ENCODE measurements at regions of chr5 and their contacts with region 1.

Region 1: DNA sequence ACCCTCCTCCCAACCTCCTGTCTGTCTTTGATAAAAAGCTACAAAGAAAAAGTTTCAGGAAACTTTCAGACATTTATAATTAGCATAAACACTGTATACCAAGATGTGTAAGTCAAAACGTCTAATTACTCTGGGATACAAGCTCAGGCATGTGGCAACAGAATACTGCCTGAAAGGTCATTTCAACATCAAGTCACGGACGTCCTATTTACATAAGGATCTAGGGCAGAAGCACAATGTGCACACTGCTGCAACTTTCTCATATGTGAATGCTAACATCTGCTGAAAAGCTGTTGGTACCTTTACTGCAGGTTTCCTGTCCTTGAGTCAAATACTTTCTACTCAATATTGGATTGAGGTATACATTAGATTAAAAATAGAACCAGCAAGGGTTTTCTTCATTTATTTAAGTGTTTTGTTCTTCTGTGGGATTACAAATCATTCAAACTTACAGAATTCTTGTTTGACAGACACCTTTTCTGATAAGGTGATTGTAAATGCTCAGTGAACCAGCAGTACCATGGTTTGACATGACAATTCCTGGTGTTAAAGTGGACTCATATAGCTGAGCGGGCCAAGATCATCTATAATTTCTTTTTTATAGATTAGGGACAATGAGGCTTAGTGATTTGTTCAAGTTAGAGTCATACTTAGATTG is 36.8 kb downstream of the ELL2 start:
- DNase-seq: no peak
- H3K4me3 ChIP-seq: no peak overlapping the region
- H3K27ac ChIP-seq: no peak overlapping the region
- H3K4me1 ChIP-seq: no peaks in the 10 kb centered on the region
- CTCF ChIP-seq: no peak

Region 2: GRCh38 chr5:95794070-95794516 is 130.8 kb before region 1 on chr5:
- CTCF ChIA-PET with region 1: no interaction called
- POLR2A ChIA-PET with region 1: no interaction called
- intact Hi-C with region 1: no loop called
- DNase-seq: no peak
- H3K4me3 ChIP-seq: no peak overlapping the region
- H3K27ac ChIP-seq: no peak overlapping the region
- H3K4me1 ChIP-seq: peaks cover 7% of the 10 kb centered on the region
- CTCF ChIP-seq: no peak

Region 3: DNA sequence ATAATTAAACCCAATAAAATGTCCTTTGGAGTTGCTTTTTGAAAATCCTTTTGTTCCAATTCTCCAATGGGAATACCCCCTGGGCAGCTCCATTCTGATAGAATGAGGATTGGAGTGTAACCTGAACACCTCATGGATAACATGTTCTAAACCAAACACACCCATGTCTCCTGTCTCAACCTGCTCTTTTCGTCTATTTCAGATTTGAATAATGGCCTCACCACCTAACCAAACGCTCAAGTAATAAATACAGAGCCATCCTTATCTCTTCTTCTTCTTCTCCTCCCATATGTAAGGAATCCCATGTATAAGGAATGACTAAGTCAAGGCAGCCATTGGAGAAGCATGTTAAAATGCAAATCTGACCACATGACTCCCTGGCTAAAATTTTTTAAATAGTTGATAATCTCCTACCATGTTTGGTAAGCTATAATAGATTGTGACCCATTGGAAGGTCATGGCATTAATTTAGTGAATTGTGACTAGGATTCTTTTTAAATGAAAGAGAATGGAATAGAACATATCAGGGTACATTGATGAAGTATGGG is 10.8 kb after region 1 on chr5:
- CTCF ChIA-PET with region 1: no interaction called
- POLR2A ChIA-PET with region 1: interaction called, 10 read pairs
- intact Hi-C with region 1: no loop called
- DNase-seq: no peak
- H3K4me3 ChIP-seq: no peak overlapping the region
- H3K27ac ChIP-seq: no peak overlapping the region
- H3K4me1 ChIP-seq: no peaks in the 10 kb centered on the region
- CTCF ChIP-seq: no peak